CD8-positive, alpha-beta T cell (primary cell): ENCODE measurements at regions of chr11 and their contacts with region 1.

Region 1: GRCh38 chr11:123246749-123247495 is 51.9 kb upstream of the CLMP start:
- DNase-seq: peak; percentile 68 to 88 (median 80)
- ATAC-seq: peak; percentile 86
- H3K4me3 ChIP-seq: no peak overlapping the region
- H3K4me3 Mint-ChIP-seq: peak overlapping the region; percentile 42
- H3K27ac ChIP-seq: no peak overlapping the region
- H3K27ac Mint-ChIP-seq: no peak overlapping the region
- H3K4me1 ChIP-seq: no peaks in the 10 kb centered on the region
- H3K4me1 Mint-ChIP-seq: peaks cover 6% of the 10 kb centered on the region
- H3K27me3 ChIP-seq: no peaks in the 10 kb centered on the region
- H3K27me3 Mint-ChIP-seq: peaks cover 12% of the 10 kb centered on the region
- CTCF ChIP-seq: peak; percentile 94

Region 2: DNA sequence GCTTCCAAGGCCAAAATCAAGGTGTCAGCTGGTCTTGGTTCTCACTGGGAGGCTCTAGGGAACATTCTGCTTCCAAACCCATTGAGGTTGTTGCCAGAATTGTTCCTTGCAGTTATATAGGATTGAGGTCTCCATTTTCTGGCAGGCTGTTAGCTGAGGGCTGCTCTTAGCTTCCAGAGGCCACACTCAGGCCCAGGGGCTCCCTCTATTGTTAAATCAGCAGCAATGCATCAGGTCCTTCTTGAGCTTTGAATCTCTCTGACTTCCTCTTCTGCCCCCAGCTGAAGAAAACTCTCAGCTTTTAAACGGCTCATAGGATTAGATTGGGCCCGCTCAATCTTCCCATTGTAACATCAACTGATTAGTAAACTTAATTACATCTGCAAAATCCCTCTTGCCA is 226.0 kb before region 1 on chr11:
- CTCF ChIA-PET with region 1: interaction called, 4 read pairs
- POLR2A ChIA-PET with region 1: interaction called, 3 read pairs
- intact Hi-C with region 1: loop called in 1 of 2 experiments (anchors 1 kb)
- DNase-seq: peak in 5 of 9 experiments; percentile 5 to 61 (median 20)
- ATAC-seq: peak; percentile 77
- H3K4me3 ChIP-seq: no peak overlapping the region
- H3K4me3 Mint-ChIP-seq: no peak overlapping the region
- H3K27ac ChIP-seq: no peak overlapping the region
- H3K27ac Mint-ChIP-seq: no peak overlapping the region
- H3K4me1 ChIP-seq: no peaks in the 10 kb centered on the region
- H3K4me1 Mint-ChIP-seq: peaks cover 7% of the 10 kb centered on the region
- H3K27me3 ChIP-seq: peaks cover 0 to 2% of the 10 kb centered on the region in 2 experiments
- H3K27me3 Mint-ChIP-seq: peaks cover 2% of the 10 kb centered on the region
- CTCF ChIP-seq: peak; percentile 55

Region 3: GRCh38 chr11:123110356-123110755 is 136.6 kb before region 1 on chr11:
- CTCF ChIA-PET with region 1: interaction called, 121 read pairs
- POLR2A ChIA-PET with region 1: interaction called, 5 read pairs
- intact Hi-C with region 1: loop called (anchors 1 kb)
- DNase-seq: peak in 2 of 9 experiments; percentile 22 to 41
- ATAC-seq: no peak
- H3K4me3 ChIP-seq: no peak overlapping the region
- H3K4me3 Mint-ChIP-seq: peak overlapping the region; percentile 62
- H3K27ac ChIP-seq: no peak overlapping the region
- H3K27ac Mint-ChIP-seq: peak overlapping the region; percentile 71
- H3K4me1 ChIP-seq: no peaks in the 10 kb centered on the region
- H3K4me1 Mint-ChIP-seq: peaks cover 4% of the 10 kb centered on the region
- H3K27me3 ChIP-seq: no peaks in the 10 kb centered on the region
- H3K27me3 Mint-ChIP-seq: no peaks in the 10 kb centered on the region
- CTCF ChIP-seq: no peak

Region 4: GRCh38 chr11:123219066-123219690 is 27.7 kb before region 1 on chr11:
- CTCF ChIA-PET with region 1: no interaction called
- POLR2A ChIA-PET with region 1: no interaction called
- intact Hi-C with region 1: no loop called
- DNase-seq: no peak
- ATAC-seq: no peak
- H3K4me3 ChIP-seq: no peak overlapping the region
- H3K4me3 Mint-ChIP-seq: no peak overlapping the region
- H3K27ac ChIP-seq: no peak overlapping the region
- H3K27ac Mint-ChIP-seq: no peak overlapping the region
- H3K4me1 ChIP-seq: no peaks in the 10 kb centered on the region
- H3K4me1 Mint-ChIP-seq: no peaks in the 10 kb centered on the region
- H3K27me3 ChIP-seq: no peaks in the 10 kb centered on the region
- H3K27me3 Mint-ChIP-seq: peaks cover 17% of the 10 kb centered on the region
- CTCF ChIP-seq: no peak

Region 5: GRCh38 chr11:123233280-123233974 is 13.5 kb before region 1 on chr11:
- CTCF ChIA-PET with region 1: interaction called, 18 read pairs
- POLR2A ChIA-PET with region 1: interaction called, 3 read pairs
- intact Hi-C with region 1: no loop called
- DNase-seq: peak in 2 of 9 experiments; percentile 27 to 46
- ATAC-seq: peak; percentile 23
- H3K4me3 ChIP-seq: no peak overlapping the region
- H3K4me3 Mint-ChIP-seq: peak overlapping the region; percentile 46
- H3K27ac ChIP-seq: peak overlapping the region in 1 of 2 experiments; percentile 64
- H3K27ac Mint-ChIP-seq: peak overlapping the region; percentile 57
- H3K4me1 ChIP-seq: peaks cover 13% of the 10 kb centered on the region
- H3K4me1 Mint-ChIP-seq: peaks cover 17% of the 10 kb centered on the region
- H3K27me3 ChIP-seq: no peaks in the 10 kb centered on the region
- H3K27me3 Mint-ChIP-seq: peaks cover 2% of the 10 kb centered on the region
- CTCF ChIP-seq: no peak